ENCODE measurements at regions of chr20 and their contacts with region 1.

Region 1: GRCh38 chr20:51966291-51966971 is 164.1 kb upstream of the SALL4 start:
- DNase-seq: peak; percentile 95
- ATAC-seq: peak; percentile 99
- H3K4me3 ChIP-seq: no peak overlapping the region
- H3K27ac ChIP-seq: no peak overlapping the region
- H3K4me1 ChIP-seq: no peaks in the 10 kb centered on the region
- H3K27me3 ChIP-seq: no peaks in the 10 kb centered on the region
- CTCF ChIP-seq: peak; percentile 97

Region 2: GRCh38 chr20:51703400-51704287 is 262.8 kb before region 1 on chr20:
- CTCF ChIA-PET with region 1: interaction called, 12 read pairs
- POLR2A ChIA-PET with region 1: no interaction called
- intact Hi-C with region 1: loop called (anchors 5 kb)
- DNase-seq: no peak
- ATAC-seq: no peak; the same call in 1 of the 2 replicates
- H3K4me3 ChIP-seq: no peak overlapping the region
- H3K27ac ChIP-seq: no peak overlapping the region
- H3K4me1 ChIP-seq: peaks cover 8% of the 10 kb centered on the region
- H3K27me3 ChIP-seq: no peaks in the 10 kb centered on the region
- CTCF ChIP-seq: no peak

Region 3: GRCh38 chr20:51860111-51860882 is 106.1 kb before region 1 on chr20:
- CTCF ChIA-PET with region 1: no interaction called
- POLR2A ChIA-PET with region 1: no interaction called
- intact Hi-C with region 1: loop called (anchors 10 kb)
- DNase-seq: peak; percentile 84
- ATAC-seq: peak; percentile 91
- H3K4me3 ChIP-seq: no peak overlapping the region
- H3K27ac ChIP-seq: no peak overlapping the region
- H3K4me1 ChIP-seq: peaks cover 12% of the 10 kb centered on the region
- H3K27me3 ChIP-seq: peaks cover 3% of the 10 kb centered on the region; the same call in 1 of the 2 replicates
- CTCF ChIP-seq: no peak

Region 4: DNA sequence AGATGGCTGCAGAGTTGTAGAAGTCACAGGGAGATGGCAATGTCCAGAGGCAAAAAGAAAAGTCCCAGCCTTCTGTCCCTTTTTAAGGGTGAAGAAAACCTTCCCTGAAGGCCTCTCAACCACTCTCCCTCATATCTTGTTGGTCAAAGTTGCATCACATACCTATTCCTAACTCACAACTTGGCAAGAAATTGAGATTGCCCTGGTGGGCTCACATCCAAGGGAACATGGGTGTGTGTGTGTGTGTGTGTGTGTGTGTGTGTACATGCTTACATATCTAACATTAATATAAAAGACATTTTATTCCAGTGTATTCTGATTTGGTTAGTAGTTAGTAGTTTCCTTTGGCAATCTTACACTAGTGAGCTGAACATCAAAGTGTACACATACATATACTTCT is 19.8 kb before region 1 on chr20:
- CTCF ChIA-PET with region 1: interaction called, 10 read pairs
- POLR2A ChIA-PET with region 1: no interaction called
- intact Hi-C with region 1: no loop called
- DNase-seq: no peak
- ATAC-seq: no peak
- H3K4me3 ChIP-seq: no peak overlapping the region
- H3K27ac ChIP-seq: no peak overlapping the region
- H3K4me1 ChIP-seq: no peaks in the 10 kb centered on the region
- H3K27me3 ChIP-seq: no peaks in the 10 kb centered on the region
- CTCF ChIP-seq: no peak

Measured in PC-3 (cell line).